ENCODE measurements at regions of chr3 and their contacts with region 1.

Region 1: DNA sequence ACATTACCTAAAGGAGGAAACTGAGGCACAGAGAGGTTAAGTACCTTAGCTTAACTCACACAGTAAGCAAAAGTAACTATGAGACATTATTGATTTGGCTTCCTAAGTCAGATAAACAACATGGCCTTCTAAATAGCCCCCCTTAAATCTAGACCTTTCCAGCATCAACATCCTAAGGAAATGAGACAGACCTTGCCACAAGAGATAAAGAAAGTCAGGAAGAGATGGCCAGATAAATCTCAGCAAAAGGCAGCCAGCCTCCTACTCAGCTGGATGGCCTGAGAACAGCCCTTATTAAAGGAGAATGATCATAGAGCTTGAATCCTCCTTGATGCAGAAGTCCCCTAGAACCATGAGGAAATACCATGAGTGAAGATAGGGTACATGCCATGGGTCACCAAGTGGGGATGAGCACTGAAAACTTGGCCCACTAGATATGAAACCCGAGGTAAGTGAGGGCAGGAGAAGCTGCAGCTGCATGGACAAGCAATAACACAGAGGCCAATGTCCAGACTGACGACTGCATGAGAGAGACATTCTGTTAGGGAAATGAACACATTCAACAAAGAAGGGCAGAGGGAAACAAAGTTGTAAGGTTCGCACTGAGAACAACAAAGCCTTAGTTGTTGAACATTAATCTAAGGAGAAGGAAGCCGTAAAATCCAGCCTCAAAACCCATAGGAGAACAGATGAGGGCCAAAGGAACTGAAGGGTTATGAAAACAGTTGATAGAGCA is 69.6 kb downstream of the ZIC4 start:
- DNase-seq: peak; percentile 91
- H3K4me3 ChIP-seq: peak overlapping the region in 1 of 3 experiments; percentile 47
- H3K27ac ChIP-seq: peak overlapping the region; percentile 93
- H3K4me1 ChIP-seq: peaks cover 43% of the 10 kb centered on the region
- H3K27me3 ChIP-seq: peaks cover 0 to 1% of the 10 kb centered on the region in 2 experiments
- CTCF ChIP-seq: no peak
- POLR2A ChIP-seq: peak; percentile 59

Region 2: DNA sequence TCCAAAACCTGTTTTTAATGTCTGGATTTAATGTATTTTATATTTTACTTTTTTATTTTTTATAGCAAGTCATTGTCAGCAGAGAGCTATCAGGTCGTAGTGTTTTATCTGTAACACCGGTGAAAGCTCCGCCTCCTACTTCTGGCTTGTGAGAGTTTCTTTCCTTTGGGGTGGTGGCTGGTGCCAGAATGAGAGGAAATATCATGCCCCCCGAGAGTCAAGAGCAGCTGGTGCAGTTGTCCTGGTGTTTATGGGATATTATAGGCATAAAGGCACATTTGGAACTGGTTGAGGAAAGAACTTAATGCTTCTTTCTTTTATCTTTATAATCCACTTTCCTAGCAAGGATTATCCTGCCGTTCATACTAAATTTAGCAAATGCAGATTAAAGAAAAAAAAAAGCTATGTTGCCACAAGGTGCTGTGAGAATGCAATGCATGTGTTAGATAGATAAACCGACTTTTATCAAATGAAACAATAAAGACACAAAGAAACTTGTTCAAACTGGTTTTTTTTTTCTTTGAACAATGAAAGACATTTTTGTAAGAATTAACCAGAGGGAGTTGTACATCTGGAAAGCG is 471.4 kb before region 1 on chr3:
- CTCF ChIA-PET with region 1: no interaction called
- POLR2A ChIA-PET with region 1: no interaction called
- dilution Hi-C with region 1: no loop called
- intact Hi-C with region 1: no loop called
- DNase-seq: no peak
- H3K4me3 ChIP-seq: no peak overlapping the region
- H3K27ac ChIP-seq: no peak overlapping the region
- H3K4me1 ChIP-seq: no peaks in the 10 kb centered on the region
- H3K27me3 ChIP-seq: no peaks in the 10 kb centered on the region
- CTCF ChIP-seq: no peak
- POLR2A ChIP-seq: no peak

Region 3: DNA sequence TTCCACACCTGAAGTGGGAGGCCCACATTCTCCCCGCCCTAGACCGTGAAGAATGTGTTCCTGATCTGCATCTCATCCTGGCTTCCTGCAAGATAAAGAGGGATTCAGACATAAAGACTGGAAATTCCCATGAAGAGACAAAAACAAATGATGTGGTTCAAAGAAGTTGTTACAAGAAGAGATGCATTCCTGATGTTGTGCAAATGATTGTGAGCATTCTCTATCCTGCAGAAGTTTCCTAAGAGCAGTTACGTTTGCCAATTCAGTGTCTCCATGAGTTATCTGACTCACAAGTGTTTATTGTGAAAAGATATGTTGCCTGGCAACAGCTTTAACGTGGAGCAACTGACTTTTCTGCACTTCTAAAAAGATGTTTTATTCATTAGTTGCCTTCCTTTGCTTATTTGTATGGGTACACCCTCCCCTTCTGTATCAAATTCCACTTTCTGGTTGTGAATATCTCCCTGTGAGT is 38.2 kb before region 1 on chr3:
- CTCF ChIA-PET with region 1: no interaction called
- POLR2A ChIA-PET with region 1: no interaction called
- dilution Hi-C with region 1: no loop called
- intact Hi-C with region 1: loop called (anchors 1 kb)
- DNase-seq: peak; percentile 75
- H3K4me3 ChIP-seq: no peak overlapping the region
- H3K27ac ChIP-seq: peak overlapping the region; percentile 50
- H3K4me1 ChIP-seq: no peaks in the 10 kb centered on the region
- H3K27me3 ChIP-seq: no peaks in the 10 kb centered on the region
- CTCF ChIP-seq: no peak
- POLR2A ChIP-seq: no peak

Region 4: DNA sequence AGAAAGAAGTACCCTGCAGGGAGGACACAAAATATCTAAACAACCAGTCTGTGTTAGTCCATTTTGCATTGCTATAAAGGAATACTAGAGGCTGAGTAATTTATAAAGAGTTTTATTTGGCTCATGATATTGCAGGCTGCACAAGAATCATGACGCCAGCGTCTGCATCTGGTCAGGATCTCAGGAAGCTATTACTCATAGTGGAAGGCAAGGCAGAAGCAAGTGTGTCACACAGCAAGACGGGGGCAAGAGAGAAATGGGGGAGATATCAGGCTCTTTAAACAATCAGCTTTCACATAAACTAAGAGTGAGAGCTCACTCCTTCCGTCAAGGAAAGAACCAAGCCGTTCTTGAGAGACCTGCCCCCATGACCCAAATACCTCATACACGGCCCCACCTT is 687.3 kb after region 1 on chr3:
- CTCF ChIA-PET with region 1: no interaction called
- POLR2A ChIA-PET with region 1: no interaction called
- dilution Hi-C with region 1: no loop called
- intact Hi-C with region 1: loop called (anchors 5 kb)
- DNase-seq: peak; percentile 92
- H3K4me3 ChIP-seq: no peak overlapping the region
- H3K27ac ChIP-seq: peak overlapping the region; percentile 80
- H3K4me1 ChIP-seq: peaks cover 17% of the 10 kb centered on the region
- H3K27me3 ChIP-seq: no peaks in the 10 kb centered on the region
- CTCF ChIP-seq: no peak
- POLR2A ChIP-seq: no peak

Region 5: DNA sequence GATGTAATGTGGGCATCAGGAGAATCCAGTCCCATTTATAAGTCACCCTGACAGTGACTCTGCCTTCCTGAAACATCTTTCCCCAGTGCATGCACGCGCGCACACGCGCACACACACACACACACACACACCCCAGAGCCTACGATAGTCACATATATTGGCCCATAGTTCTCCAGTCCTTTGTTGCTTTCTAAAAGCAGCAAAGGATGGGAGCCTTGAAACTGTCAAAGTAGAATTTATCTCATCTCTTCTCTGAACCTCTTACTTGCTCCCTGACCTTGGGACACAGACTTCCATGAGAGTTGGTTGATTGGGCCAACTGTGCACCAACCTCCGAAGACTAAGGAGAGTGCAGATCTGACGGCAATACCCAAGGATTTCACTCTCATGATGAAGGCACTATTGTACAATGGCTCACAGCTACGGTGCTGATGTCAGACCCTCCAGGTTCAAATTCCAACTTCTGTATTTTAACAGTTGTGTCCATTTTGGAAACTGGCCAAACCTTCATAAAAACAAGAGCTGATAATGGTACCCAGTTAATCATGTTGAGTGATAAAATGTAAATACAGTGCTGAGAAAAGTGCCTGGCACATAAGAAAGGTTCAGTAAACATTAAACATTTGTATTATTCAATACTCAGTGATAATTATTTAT is 1536.7 kb after region 1 on chr3:
- CTCF ChIA-PET with region 1: no interaction called
- POLR2A ChIA-PET with region 1: no interaction called
- dilution Hi-C with region 1: no loop called
- intact Hi-C with region 1: loop called (anchors 10 kb)
- DNase-seq: peak; percentile 59
- H3K4me3 ChIP-seq: no peak overlapping the region
- H3K27ac ChIP-seq: no peak overlapping the region
- H3K4me1 ChIP-seq: peaks cover 22% of the 10 kb centered on the region
- H3K27me3 ChIP-seq: no peaks in the 10 kb centered on the region
- CTCF ChIP-seq: no peak
- POLR2A ChIP-seq: no peak